H1 (cell line): ENCODE measurements at regions of chr1 and their contacts with region 1.

Region 1: DNA sequence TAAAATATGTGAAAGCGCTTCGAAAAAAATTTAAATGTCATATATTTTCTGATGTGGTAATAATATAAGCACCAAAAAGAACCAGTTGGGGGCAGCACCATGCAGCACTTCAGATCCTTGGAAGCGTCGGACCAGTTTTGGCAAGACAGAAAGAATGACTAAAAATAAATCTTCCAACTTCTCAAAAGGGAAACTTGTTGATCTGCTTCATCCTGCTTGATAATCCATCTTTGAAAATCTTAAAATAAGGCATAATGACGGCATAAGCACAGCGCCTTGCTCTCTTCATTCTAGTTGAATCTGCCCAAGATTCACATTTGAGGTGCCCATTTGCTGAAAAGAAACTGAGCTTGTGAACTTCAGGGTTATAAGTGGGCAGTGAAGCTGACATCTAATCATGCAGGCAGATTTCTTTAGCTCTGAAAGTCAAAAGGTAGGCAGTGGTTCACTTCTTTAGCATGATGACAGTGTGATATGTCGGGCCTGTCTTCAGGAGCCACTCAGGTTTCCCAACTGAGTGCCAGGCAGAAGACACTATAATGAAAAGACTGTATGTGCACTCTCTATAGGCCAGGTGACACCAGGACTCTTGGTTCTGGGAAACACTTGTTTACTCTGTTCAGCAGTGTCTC is 19.8 kb upstream of the MUTYH start:
- DNase-seq: no peak
- H3K4me3 ChIP-seq: no peak overlapping the region
- H3K27ac ChIP-seq: no peak overlapping the region
- H3K4me1 ChIP-seq: peaks cover 2 to 11% (median 8%) of the 10 kb centered on the region in 4 experiments
- H3K27me3 ChIP-seq: no peaks in the 10 kb centered on the region
- CTCF ChIP-seq: peak; percentile 18 to 61 (median 46)
- EP300 ChIP-seq: no peak
- POLR2A ChIP-seq: no peak
- RAD21 ChIP-seq: peak; percentile 78 to 83

Region 2: GRCh38 chr1:45326627-45327623 is 33.1 kb before region 1 on chr1 and contains the start of gene HPDL:
- CTCF ChIA-PET with region 1: interaction called, 29 read pairs
- POLR2A ChIA-PET with region 1: interaction called, 8 read pairs
- DNase-seq: peak; percentile 64 to 85
- H3K4me3 ChIP-seq: peak within 1 kb of the TSS; percentile 61 to 69 (median 64)
- H3K27ac ChIP-seq: peak within 1 kb of the TSS; percentile 65; the same call in 1 of the 2 replicates
- H3K4me1 ChIP-seq: peaks cover 8 to 24% (median 14%) of the 10 kb centered on the region in 4 experiments; a peak in 6 of 7 replicates
- H3K27me3 ChIP-seq: no peaks in the 10 kb centered on the region
- CTCF ChIP-seq: no peak
- EP300 ChIP-seq: peak in 1 of 2 experiments; percentile 15; a peak in 1 of 3 replicates
- POLR2A ChIP-seq: peak; percentile 77 to 100
- RAD21 ChIP-seq: peak; percentile 14 to 23; a peak in 1 of 4 replicates
- total RNA-seq, gene HPDL: 58.5 and 60.6 TPM in 2 replicates

Region 3: GRCh38 chr1:45339789-45340570 is 20.0 kb before region 1 on chr1 and contains the starts of genes MUTYH and TOE1:
- CTCF ChIA-PET with region 1: interaction called, 139 read pairs
- POLR2A ChIA-PET with region 1: interaction called, 162 read pairs
- DNase-seq: peak; percentile 88 to 95
- H3K4me3 ChIP-seq: peak within 1 kb of the TSS; percentile 84 to 97 (median 92)
- H3K27ac ChIP-seq: peak within 1 kb of the TSS; percentile 97
- H3K4me1 ChIP-seq: peaks cover 0 to 9% (median 6%) of the 10 kb centered on the region in 4 experiments; a peak in 6 of 7 replicates
- H3K27me3 ChIP-seq: no peaks in the 10 kb centered on the region
- CTCF ChIP-seq: no peak
- EP300 ChIP-seq: no peak
- POLR2A ChIP-seq: peak; percentile 94 to 96
- RAD21 ChIP-seq: no peak
- total RNA-seq, gene MUTYH: 51.9 TPM in 2 replicates
- total RNA-seq, gene TOE1: 14.5 and 15.2 TPM in 2 replicates

Region 4: DNA sequence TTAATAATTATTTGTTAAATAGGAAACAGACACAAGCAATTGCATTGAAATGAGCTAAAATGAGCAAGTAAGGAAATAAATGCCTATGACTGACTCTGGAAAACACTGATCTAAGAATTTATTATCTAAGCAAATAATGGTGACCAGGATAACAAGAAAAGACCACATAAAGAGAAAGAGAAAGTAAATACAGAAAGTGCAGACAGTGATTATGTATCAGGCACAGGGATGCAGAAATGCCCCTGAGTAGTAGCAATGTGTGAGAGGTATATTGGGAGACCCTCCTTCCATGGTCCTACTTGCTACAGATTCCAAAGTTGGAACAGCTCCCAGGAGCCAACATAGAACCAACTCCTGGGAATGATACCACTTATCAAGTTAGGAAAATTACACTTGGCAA is 13.6 kb after region 1 on chr1:
- CTCF ChIA-PET with region 1: interaction called, 18 read pairs
- POLR2A ChIA-PET with region 1: interaction called, 3 read pairs
- DNase-seq: no peak
- H3K4me3 ChIP-seq: no peak overlapping the region
- H3K27ac ChIP-seq: no peak overlapping the region
- H3K4me1 ChIP-seq: no peaks in the 10 kb centered on the region
- H3K27me3 ChIP-seq: no peaks in the 10 kb centered on the region
- CTCF ChIP-seq: no peak
- EP300 ChIP-seq: no peak
- POLR2A ChIP-seq: no peak
- RAD21 ChIP-seq: no peak

Region 5: DNA sequence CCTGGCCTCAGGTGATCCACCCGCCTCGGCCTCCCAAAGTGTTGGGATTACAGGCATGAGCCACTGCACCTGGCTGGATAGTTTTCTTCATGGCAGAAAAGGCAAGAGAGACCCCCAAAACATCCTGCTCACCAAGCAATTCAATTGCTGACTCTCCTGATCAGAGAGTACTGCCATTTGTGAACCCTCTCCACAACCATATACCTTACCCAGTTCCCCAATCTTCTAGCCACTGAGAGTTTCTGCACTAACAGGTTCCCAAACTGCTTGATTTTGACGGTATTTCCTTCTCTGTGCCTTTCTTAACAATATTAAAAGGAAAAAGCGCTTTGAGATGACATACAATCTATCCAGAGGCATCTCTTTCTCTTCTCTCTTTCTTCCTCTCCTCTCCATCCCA is 20.1 kb after region 1 on chr1:
- CTCF ChIA-PET with region 1: interaction called, 10 read pairs
- POLR2A ChIA-PET with region 1: no interaction called
- DNase-seq: no peak
- H3K4me3 ChIP-seq: no peak overlapping the region
- H3K27ac ChIP-seq: no peak overlapping the region
- H3K4me1 ChIP-seq: no peaks in the 10 kb centered on the region
- H3K27me3 ChIP-seq: no peaks in the 10 kb centered on the region
- CTCF ChIP-seq: no peak
- EP300 ChIP-seq: no peak
- POLR2A ChIP-seq: no peak
- RAD21 ChIP-seq: no peak

Region 6: DNA sequence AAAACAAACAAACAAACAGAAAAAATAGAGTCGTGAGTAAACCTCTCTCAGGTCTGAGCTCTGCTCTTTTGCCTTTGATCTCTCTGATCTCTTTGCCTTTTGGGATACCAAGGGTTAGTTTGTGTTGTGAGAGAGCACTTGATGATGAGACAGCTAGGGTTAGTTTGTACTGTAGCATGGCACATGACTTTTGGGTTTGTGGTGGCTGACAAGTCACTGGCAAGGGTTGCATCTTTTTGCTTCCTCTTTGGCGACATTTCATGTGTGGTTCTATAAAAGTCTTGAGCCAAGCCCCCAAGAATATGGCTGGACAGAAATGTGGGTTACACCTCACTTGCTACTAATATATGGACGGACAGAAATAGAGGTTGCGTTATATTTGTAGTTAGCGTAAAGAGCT is 70.5 kb after region 1 on chr1:
- CTCF ChIA-PET with region 1: no interaction called
- POLR2A ChIA-PET with region 1: no interaction called
- DNase-seq: no peak
- H3K4me3 ChIP-seq: no peak overlapping the region
- H3K27ac ChIP-seq: no peak overlapping the region
- H3K4me1 ChIP-seq: no peaks in the 10 kb centered on the region
- H3K27me3 ChIP-seq: no peaks in the 10 kb centered on the region; a peak in 1 of 7 replicates
- CTCF ChIP-seq: no peak
- EP300 ChIP-seq: no peak
- POLR2A ChIP-seq: no peak
- RAD21 ChIP-seq: no peak